Heart left ventricle (tissue), 16 donors: ENCODE measurements at regions of chr4 and their contacts with region 1.

Region 1: DNA sequence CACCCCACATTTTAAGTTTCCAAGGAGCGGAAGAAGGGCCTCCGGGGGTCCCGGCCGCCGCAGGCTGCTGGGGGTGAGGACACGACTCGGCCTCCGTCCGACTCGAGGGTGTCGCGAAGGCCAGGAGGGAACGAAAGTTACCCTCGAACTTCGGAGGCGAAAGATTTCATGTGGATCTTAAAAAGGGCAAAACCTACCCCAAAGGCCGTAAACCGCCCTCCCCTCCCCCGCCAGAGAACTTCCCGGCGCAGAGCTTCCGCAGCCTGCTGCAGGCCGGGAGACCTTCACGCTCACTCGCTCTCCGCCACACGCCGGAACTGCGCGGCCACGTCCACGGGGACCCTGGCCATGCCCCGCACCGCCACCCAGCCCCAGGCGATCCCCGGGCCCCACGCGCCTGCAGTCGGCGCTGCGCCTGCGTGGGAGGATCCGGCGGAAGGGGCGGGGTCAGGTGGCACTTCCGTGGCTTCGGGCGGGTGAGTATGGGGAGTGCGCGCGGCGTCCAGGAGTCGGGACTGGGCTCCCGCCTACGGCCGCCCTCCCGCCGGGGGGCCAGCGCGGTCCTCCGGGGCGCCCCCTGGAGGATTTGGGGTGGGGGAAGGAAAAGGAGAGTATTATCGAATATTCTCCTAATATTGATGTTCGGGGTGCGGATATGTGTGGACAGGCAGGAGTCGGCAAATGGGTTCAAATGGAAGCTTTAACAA is at the start of gene MMAA:
- DNase-seq: peak; percentile 96 to 98 (median 97)
- ATAC-seq: peak; percentile 99 to 100 (median 100)
- H3K4me3 ChIP-seq: peak within 1 kb of the TSS; percentile 60 to 89 (median 78)
- H3K27ac ChIP-seq: peak within 1 kb of the TSS; percentile 88 to 98 (median 94)
- H3K4me1 ChIP-seq: peaks cover 0 to 35% (median 11%) of the 10 kb centered on the region in 12 donors
- H3K27me3 ChIP-seq: no peaks in the 10 kb centered on the region
- CTCF ChIP-seq: peak; percentile 43 to 87 (median 68)
- POLR2A ChIP-seq: peak; percentile 50 to 92
- total RNA-seq, gene MMAA: 3.3 to 12.6 (median 8.7) TPM

Region 2: DNA sequence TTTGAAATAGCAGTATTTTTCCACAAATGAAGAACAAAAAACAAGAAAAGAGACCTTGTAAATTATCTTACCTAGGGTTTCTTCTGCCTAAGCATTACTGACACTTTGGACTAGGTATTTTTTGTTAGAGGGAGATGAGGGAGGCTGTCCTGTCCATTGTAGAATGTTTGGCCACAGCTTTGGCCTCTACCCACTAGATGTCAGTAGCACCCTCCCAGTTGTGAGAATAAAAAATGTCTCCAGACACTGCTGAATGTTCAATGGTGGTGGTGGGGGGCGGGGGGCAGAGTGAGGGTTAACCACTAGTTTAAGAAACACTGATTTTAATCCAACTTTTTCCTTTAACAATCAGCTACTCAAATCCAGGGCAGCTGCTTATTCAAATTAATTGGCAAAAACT is 464.5 kb before region 1 on chr4:
- intact Hi-C with region 1: loop called in 9 of 10 experiments (anchors 2 to 10 kb)
- DNase-seq: no peak
- ATAC-seq: peak; percentile 51 to 86 (median 82)
- H3K4me3 ChIP-seq: no peak overlapping the region
- H3K27ac ChIP-seq: peak overlapping the region in 7 of 12 donors; percentile 21 to 77 (median 57)
- H3K4me1 ChIP-seq: peaks cover 0 to 22% (median 5%) of the 10 kb centered on the region in 12 donors
- H3K27me3 ChIP-seq: no peaks in the 10 kb centered on the region
- CTCF ChIP-seq: peak; percentile 23 to 65 (median 54)
- POLR2A ChIP-seq: no peak

Region 3: DNA sequence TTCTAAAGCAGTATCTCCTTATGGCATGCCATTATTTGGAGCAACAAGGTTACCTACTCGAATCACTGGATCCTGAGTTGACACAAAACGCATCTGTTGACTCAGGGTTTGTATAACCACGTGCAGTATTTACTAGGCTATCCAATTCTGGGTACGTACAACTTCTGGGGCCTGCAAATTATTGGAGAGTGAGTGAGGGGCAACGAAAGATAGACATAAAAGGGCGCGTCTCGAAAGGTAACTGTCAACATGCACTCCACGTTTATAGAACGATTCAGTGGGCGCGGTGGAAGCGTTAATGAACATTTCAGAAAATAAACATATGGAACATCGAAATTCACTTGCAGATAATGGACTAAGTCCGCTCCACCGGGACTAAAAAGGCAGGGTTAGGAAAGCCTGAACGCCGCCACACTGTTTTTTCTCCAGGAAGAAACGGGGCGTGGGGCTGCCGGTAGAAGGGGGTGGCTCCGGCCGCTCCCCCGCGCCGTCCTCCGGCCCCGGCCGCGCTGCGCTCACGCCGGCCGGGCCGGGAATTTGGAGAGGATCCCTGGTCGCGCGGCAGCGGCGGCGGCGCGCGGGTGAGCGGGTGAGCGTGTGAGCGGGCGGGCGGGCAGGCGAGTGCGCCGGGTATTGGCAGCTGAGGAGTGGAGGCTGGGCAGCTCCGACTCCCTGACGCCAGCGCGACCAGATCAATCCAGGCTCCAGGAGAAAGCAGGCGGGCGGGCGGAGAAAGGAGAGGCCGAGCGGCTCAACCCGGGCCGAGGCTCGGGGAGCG is 137.7 kb before region 1 on chr4 and contains the start of gene SMAD1:
- intact Hi-C with region 1: loop called in 5 of 10 experiments (anchors 5 kb)
- DNase-seq: peak; percentile 86 to 92 (median 91)
- ATAC-seq: peak; percentile 95 to 97 (median 95)
- H3K4me3 ChIP-seq: peak within 1 kb of the TSS; percentile 70 to 99 (median 85)
- H3K27ac ChIP-seq: peak within 1 kb of the TSS; percentile 92 to 99 (median 97)
- H3K4me1 ChIP-seq: peaks cover 0 to 39% (median 18%) of the 10 kb centered on the region in 12 donors
- H3K27me3 ChIP-seq: no peaks in the 10 kb centered on the region
- CTCF ChIP-seq: peak in 1 of 12 donors; percentile 9
- POLR2A ChIP-seq: peak in 1 of 2 donors; percentile 63
- total RNA-seq, gene SMAD1: 9.0 to 21.4 (median 15.2) TPM

Region 4: GRCh38 chr4:145679991-145680455 is 60.9 kb after region 1 on chr4 and contains the start of gene C4orf51:
- intact Hi-C with region 1: loop called in 1 of 10 experiments (anchors 10 kb)
- DNase-seq: peak in 1 of 5 donors; percentile 26
- ATAC-seq: peak; percentile 54 to 74 (median 64)
- H3K4me3 ChIP-seq: no peak within 1 kb of the TSS
- H3K27ac ChIP-seq: peak within 1 kb of the TSS in 9 of 12 donors; percentile 3 to 53 (median 22)
- H3K4me1 ChIP-seq: peaks cover 0 to 18% (median 13%) of the 10 kb centered on the region in 12 donors
- H3K27me3 ChIP-seq: no peaks in the 10 kb centered on the region
- CTCF ChIP-seq: no peak
- POLR2A ChIP-seq: no peak
- total RNA-seq, gene C4orf51: not detected

Region 5: DNA sequence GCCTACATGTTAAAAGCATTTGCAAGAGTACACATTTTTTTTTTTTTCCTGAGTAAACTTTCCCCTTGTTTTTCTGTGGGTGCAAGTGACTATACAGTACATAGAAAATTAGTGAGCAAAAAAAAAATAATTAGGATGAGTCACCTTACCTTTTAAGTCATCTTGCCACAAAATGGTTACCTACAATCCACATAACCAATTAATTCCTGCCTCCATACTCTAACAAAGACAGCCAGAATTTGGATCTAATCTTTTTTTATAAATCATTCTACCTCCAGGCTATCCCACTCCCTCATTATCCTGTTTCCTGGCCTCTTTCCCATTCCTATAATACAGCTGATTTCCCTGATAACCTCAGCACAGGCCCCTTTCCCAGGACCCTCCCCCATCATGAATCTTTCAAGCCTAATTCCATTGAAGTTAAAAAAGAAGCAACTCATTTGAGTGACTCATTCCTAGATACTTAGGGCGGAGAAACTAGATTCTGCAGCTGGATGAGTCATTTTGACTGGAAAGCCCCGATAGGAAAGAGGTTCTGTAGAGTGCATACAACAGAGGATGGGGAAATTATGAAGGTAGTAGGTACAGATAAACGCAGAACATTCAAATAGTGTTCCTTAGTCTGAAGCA is 189.1 kb after region 1 on chr4:
- intact Hi-C with region 1: loop called in 1 of 10 experiments (anchors 10 kb)
- DNase-seq: no peak
- ATAC-seq: peak in 3 of 4 donors; percentile 72 to 80 (median 74)
- H3K4me3 ChIP-seq: no peak overlapping the region
- H3K27ac ChIP-seq: peak overlapping the region in 7 of 12 donors; percentile 15 to 75 (median 61)
- H3K4me1 ChIP-seq: peaks cover 4 to 46% (median 25%) of the 10 kb centered on the region in 12 donors
- H3K27me3 ChIP-seq: no peaks in the 10 kb centered on the region
- CTCF ChIP-seq: no peak
- POLR2A ChIP-seq: no peak

Region 6: DNA sequence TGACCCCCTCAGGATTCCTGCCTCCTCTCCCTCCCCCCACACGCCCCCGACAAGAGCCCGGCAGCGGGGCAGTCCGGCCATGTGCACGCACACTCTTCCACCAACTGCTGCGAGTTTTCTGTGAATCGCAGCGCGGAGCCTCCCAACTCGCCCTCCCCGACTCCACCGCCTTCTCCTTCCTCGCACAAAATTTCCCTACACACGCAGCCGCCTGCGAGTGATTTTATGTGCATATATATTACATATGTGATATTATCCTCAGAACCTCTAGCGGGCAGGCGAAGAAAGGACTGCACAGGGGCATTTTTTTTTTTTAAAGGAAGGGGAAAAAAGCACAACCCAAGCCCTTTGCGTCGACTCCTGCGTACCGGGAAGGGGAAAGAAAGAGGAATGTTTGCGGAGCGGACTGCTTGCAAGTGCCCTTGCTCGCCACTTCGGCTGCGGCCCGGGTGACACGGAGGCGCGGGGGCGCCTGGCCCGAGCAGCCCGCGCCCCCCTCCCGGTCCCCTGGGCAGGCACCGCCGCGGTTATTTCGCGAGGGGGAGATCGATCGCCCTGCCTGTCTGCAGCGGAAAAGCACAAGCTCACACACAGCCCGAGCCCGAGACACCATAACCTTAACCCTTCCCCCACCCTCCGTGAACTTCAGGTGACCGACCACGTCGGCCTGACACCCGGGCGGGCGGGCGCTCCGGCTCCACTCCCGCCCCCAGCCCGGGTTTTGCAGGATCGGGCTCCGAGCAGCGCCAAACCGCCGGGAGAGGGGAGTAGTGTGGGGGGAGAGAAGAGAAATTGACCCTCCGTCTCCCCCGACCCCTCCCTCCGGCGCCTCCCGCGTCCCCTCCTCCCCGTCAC is 317.3 kb after region 1 on chr4:
- intact Hi-C with region 1: loop called in 4 of 10 experiments (anchors 5 to 10 kb)
- DNase-seq: peak; percentile 74 to 82 (median 78)
- ATAC-seq: peak; percentile 34 to 76 (median 66)
- H3K4me3 ChIP-seq: peak overlapping the region; percentile 70 to 93 (median 80)
- H3K27ac ChIP-seq: peak overlapping the region; percentile 92 to 99 (median 96)
- H3K4me1 ChIP-seq: peaks cover 0 to 31% (median 19%) of the 10 kb centered on the region in 12 donors
- H3K27me3 ChIP-seq: no peaks in the 10 kb centered on the region
- CTCF ChIP-seq: peak in 7 of 12 donors; percentile 10 to 28 (median 12)
- POLR2A ChIP-seq: peak in 1 of 2 donors; percentile 28

Region 7: DNA sequence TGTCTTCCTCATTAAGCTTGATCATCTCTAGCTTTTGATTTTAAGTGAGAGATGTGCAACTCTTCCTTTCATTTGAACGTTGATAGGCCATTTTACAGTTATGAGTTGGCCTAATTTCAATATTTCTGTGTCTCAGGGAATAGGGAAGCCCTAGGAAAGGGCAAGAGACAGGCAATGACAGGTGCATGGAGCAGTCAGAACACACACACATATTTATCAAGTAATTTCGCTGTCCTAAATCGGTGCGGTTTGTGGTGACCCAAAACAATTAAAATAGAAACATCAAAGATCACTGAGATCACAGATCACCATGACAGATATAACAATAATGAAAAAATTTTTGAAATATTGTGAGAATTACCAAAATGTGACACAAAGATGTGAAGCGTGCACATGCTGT is 468.8 kb after region 1 on chr4:
- intact Hi-C with region 1: no loop called
- DNase-seq: no peak
- ATAC-seq: no peak
- H3K4me3 ChIP-seq: no peak overlapping the region
- H3K27ac ChIP-seq: no peak overlapping the region
- H3K4me1 ChIP-seq: no peaks in the 10 kb centered on the region
- H3K27me3 ChIP-seq: peaks cover 0 to 6% (median 0%) of the 10 kb centered on the region in 9 donors
- CTCF ChIP-seq: no peak
- POLR2A ChIP-seq: no peak

Region 8: GRCh38 chr4:146182450-146182849 is 563.4 kb after region 1 on chr4:
- intact Hi-C with region 1: no loop called
- DNase-seq: no peak
- ATAC-seq: no peak
- H3K4me3 ChIP-seq: no peak overlapping the region
- H3K27ac ChIP-seq: no peak overlapping the region
- H3K4me1 ChIP-seq: peaks cover 0 to 38% (median 27%) of the 10 kb centered on the region in 12 donors
- H3K27me3 ChIP-seq: no peaks in the 10 kb centered on the region
- CTCF ChIP-seq: no peak
- POLR2A ChIP-seq: no peak